Activated CD4-positive, alpha-beta T cell treated with anti-CD3 and anti-CD28 coated beads for 36 hours (primary cell): ENCODE measurements at regions of chr1 and their contacts with region 1.

Region 1: GRCh38 chr1:223233410-223234169 is 90.5 kb upstream of the TLR5 start:
- DNase-seq: peak; percentile 44
- ATAC-seq: peak; percentile 56
- H3K4me3 Mint-ChIP-seq: no peak overlapping the region
- H3K27ac Mint-ChIP-seq: peak overlapping the region; percentile 8
- H3K4me1 Mint-ChIP-seq: peaks cover 69% of the 10 kb centered on the region
- H3K27me3 Mint-ChIP-seq: no peaks in the 10 kb centered on the region

Region 2: DNA sequence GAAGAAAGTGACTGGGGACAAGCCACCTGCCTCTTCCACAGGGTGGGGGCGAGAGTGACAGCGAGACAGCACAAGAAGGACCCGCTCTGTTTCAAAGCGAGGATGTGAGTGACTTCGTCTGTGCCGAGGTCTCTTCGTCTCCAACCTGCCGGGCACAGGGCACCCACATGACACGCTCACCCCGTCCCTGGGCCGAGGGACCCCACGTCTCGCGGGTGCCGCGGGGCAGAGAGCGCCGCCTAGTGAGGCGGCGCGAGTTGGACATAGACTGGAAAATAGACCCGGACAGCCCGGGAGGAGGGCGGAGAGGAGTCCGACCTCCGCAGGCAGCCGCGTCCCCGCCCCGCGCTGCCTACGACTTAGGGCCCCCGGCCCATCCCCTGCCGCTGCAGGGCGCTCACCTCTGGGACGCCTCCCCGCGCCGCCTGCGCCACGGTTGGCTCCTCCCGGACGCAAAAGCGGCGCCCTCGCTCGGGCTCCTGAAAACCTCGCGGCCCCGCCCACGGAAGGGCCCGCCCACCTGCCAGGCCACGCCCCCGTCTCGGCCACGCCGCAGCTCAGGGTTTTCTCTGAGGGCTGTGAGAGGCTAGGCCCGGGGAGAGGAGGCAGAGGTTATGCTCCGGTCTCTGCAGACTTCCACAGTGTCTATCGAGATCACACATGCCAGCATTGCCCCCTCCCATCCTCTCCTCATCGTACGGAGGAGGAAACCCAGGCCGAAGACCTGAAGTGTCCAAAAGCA is 90.6 kb before region 1 on chr1 and contains the start of gene TLR5:
- CTCF ChIA-PET with region 1: no interaction called
- POLR2A ChIA-PET with region 1: interaction called, 4 read pairs
- intact Hi-C with region 1: loop called in 1 of 2 experiments (anchors 5 kb)
- DNase-seq: peak; percentile 93
- ATAC-seq: peak; percentile 89
- H3K4me3 Mint-ChIP-seq: peak within 1 kb of the TSS; percentile 69
- H3K27ac Mint-ChIP-seq: peak within 1 kb of the TSS; percentile 79
- H3K4me1 Mint-ChIP-seq: peaks cover 30% of the 10 kb centered on the region
- H3K27me3 Mint-ChIP-seq: peaks cover 2% of the 10 kb centered on the region
- total RNA-seq, gene TLR5: 0.21 to 0.56 TPM

Region 3: DNA sequence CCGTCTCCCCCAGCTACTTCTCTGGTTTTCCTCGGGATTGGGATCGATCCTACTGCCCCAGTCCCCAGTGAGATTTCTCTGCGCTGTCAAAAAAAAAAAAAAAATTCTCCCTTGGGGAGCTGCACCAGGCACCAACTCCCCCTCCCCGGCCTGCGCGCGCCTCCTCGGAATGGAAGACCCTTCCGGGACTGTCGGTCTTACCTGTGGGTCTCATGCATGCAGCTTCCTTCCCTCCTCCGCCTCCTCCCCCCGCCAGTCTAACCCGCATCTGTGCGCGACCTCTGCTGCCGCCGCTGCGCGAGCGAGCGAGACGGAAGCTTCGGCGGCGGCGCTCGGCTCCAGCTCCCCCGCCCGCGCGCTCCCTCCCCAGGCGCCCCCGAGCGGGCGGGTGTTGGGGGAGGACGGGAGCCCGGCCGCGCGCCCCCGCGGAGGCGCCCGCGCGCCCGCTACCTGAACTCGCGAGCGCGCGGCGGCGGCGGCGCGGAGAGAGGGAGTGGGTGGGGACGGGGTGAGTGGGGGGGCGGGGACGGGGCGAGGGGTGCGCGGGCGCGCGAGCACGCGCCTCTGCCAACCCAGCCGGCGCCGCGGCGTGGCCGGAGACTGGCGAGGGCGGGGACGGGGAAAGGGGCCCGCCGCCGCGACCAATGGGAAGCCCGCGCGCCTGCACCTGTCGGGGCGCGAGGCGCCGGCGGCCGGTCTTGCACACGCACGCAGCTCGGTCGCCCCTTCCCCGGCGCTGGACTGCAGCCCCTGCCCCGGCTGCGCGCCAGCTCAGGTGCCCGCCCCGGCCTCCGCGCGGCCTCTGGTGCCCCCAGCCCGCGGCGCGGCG is 130.5 kb after region 1 on chr1 and contains the start of gene SUSD4:
- CTCF ChIA-PET with region 1: no interaction called
- POLR2A ChIA-PET with region 1: no interaction called
- intact Hi-C with region 1: loop called in 1 of 2 experiments (anchors 10 kb)
- DNase-seq: peak; percentile 82
- ATAC-seq: peak; percentile 90
- H3K4me3 Mint-ChIP-seq: peak within 1 kb of the TSS; percentile 80
- H3K27ac Mint-ChIP-seq: peak within 1 kb of the TSS; percentile 37
- H3K4me1 Mint-ChIP-seq: peaks cover 18% of the 10 kb centered on the region
- H3K27me3 Mint-ChIP-seq: peaks cover 11% of the 10 kb centered on the region
- total RNA-seq, gene SUSD4: 1.9 to 2.2 TPM